ENCODE measurements at regions of chr9 and their contacts with region 1.

Region 1: DNA sequence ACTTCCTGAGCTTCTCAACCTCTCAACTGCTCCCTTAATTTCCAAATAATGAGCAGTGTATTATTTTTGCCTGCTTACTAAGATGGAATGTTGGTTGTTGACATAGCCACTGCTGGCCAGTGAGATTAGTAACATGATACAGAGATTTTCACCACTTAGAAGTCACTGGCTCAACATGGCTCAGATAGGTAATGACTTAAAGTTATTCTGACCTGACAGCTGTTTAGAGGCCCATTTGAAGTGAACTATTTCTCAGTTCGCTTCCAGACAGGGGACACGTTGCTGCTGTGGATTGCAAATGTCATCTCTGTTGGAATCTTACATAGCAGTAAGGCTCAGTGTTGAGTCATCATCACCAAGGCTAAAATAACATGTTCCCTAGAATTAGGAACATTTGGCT is 490.2 kb downstream of the TLE4 start:
- DNase-seq: no peak
- ATAC-seq: peak in 6 of 8 donors; percentile 56 to 91 (median 82)
- H3K4me3 ChIP-seq: no peak overlapping the region
- H3K27ac ChIP-seq: peak overlapping the region in 2 of 10 donors; percentile 5 to 13
- H3K4me1 ChIP-seq: peaks cover 0 to 5% (median 0%) of the 10 kb centered on the region in 9 donors
- H3K27me3 ChIP-seq: peaks cover 0 to under 1% (median 0%) of the 10 kb centered on the region in 7 donors
- CTCF ChIP-seq: no peak

Region 2: DNA sequence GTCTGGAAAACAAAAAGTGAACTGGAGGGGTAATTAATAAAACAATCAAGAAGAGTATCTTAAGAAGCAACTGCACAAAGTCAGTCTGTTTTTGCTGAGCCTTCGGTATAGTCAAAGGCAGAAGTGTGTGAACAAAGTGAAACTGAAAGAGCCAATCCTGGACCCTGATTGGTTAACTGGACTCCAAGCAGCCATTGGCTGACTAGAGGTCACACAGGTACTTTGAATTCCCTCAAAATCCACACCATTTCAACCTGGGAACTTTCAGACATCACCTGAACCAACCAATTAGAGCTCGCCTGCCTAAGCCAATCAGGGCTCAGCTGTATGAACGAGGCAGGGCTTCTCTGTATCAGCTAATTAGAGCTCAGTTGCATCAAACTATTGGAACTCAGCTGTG is 203.4 kb before region 1 on chr9:
- intact Hi-C with region 1: no loop called
- DNase-seq: no peak
- ATAC-seq: peak in 2 of 8 donors; percentile 52 to 53
- H3K4me3 ChIP-seq: no peak overlapping the region
- H3K27ac ChIP-seq: peak overlapping the region in 1 of 10 donors; percentile 73
- H3K4me1 ChIP-seq: peaks cover 0 to 11% (median 0%) of the 10 kb centered on the region in 9 donors
- H3K27me3 ChIP-seq: no peaks in the 10 kb centered on the region
- CTCF ChIP-seq: no peak

Region 3: DNA sequence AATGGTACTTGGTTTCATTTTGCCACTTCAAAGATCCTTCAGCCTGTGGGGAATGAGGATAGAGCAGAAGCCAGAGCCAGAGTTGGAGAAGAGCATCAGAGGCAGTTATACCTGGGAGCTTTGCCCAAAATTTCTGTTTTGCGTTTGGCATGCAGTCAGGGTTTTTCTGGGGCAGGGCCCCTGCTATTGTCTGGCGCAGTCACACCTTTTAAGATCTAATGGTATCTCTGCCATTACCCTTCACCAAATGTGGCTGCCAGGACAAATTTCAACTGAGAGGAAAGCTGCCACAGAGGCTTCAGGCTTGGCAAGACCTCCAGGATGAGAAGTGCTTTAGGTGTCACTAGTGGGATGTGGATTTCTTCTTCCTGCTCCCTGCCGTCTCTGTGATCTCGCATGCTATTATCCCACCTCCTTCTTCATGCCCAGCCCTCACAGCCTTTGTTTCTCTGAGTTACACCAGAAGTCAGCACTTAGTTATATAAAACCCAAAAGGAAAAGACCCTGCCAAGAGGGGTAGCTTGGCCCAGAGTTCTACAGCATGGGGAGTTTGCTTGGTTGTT is 133.2 kb before region 1 on chr9:
- intact Hi-C with region 1: loop called in 1 of 10 experiments (anchors 10 kb)
- DNase-seq: no peak
- ATAC-seq: no peak
- H3K4me3 ChIP-seq: no peak overlapping the region
- H3K27ac ChIP-seq: no peak overlapping the region
- H3K4me1 ChIP-seq: no peaks in the 10 kb centered on the region
- H3K27me3 ChIP-seq: no peaks in the 10 kb centered on the region
- CTCF ChIP-seq: no peak

Region 4: GRCh38 chr9:80114241-80114640 is 52.3 kb after region 1 on chr9:
- intact Hi-C with region 1: no loop called
- DNase-seq: no peak
- ATAC-seq: no peak
- H3K4me3 ChIP-seq: no peak overlapping the region
- H3K27ac ChIP-seq: no peak overlapping the region
- H3K4me1 ChIP-seq: no peaks in the 10 kb centered on the region
- H3K27me3 ChIP-seq: no peaks in the 10 kb centered on the region
- CTCF ChIP-seq: no peak

Region 5: DNA sequence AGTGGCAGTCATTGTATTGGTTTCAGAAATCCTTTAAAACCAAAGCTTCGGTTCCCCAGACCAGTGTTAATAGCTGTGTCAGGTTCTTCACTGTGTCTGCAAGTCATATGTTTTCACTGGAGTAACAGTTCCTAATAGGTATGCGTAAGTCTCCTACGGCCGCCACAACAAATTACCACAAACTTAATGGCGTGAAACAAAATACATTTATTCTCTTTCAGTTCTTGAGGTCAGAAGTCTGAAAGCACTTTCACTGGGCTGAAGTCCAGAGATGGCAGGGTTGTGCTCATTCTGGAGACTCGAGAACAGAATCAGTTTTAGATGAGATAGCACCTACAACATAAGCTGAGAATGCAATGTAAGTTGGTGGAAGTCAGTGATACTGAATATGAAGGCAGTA is 66.0 kb after region 1 on chr9:
- intact Hi-C with region 1: no loop called
- DNase-seq: no peak
- ATAC-seq: no peak
- H3K4me3 ChIP-seq: no peak overlapping the region
- H3K27ac ChIP-seq: no peak overlapping the region
- H3K4me1 ChIP-seq: no peaks in the 10 kb centered on the region
- H3K27me3 ChIP-seq: peaks cover 0 to 6% (median 0%) of the 10 kb centered on the region in 7 donors
- CTCF ChIP-seq: no peak

Measured in heart right ventricle (tissue), 16 donors.